MCF 10A (cell line): ENCODE measurements at regions of chr7 and their contacts with region 1.

Region 1: GRCh38 chr7:74401137-74401859 is 52.4 kb upstream of the GTF2IRD1 start:
- DNase-seq: peak; percentile 71
- H3K4me3 Mint-ChIP-seq: no peak overlapping the region
- H3K27ac Mint-ChIP-seq: no peak overlapping the region
- H3K4me1 Mint-ChIP-seq: no peaks in the 10 kb centered on the region
- H3K27me3 Mint-ChIP-seq: no peaks in the 10 kb centered on the region
- CTCF ChIP-seq: peak; percentile 99

Region 2: DNA sequence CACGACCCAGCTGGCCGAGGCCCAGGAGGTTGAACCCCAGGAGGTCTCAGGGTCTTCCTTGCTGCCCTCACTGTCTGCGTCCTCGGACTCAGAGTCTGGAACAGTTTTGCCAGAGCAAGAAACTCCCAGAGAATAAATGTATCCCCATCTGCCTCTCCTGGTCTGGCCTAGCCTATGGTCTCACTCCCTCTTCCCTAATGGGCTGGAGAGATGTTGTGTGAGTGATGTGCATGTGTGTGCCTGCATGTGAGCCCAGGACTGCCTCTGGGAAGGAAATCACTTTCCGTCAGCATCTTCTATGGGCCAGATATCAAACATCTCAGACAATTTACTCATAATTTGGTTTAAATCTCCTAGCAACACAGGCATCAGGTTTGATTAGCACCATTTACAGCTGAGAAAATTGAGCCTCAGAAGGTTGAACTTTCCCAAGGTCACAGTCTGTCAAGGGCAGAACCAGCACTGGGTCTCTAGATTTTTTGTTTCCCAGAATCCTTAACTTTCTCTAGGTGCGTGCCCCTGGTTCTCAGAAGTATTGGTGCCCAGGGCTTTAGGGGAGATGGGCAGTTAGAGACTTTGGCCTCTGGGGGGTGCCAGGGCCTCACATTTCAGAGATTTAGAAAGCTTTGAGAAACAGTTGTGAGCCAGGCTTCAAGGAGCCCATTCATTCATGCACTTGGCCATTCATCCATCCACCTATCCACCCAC is 535.4 kb before region 1 on chr7:
- CTCF ChIA-PET with region 1: interaction called, 17 read pairs
- POLR2A ChIA-PET with region 1: no interaction called
- intact Hi-C with region 1: loop called (anchors 1 kb)
- DNase-seq: peak; percentile 68
- H3K4me3 Mint-ChIP-seq: no peak overlapping the region
- H3K27ac Mint-ChIP-seq: no peak overlapping the region
- H3K4me1 Mint-ChIP-seq: no peaks in the 10 kb centered on the region
- H3K27me3 Mint-ChIP-seq: no peaks in the 10 kb centered on the region
- CTCF ChIP-seq: peak; percentile 77

Region 3: DNA sequence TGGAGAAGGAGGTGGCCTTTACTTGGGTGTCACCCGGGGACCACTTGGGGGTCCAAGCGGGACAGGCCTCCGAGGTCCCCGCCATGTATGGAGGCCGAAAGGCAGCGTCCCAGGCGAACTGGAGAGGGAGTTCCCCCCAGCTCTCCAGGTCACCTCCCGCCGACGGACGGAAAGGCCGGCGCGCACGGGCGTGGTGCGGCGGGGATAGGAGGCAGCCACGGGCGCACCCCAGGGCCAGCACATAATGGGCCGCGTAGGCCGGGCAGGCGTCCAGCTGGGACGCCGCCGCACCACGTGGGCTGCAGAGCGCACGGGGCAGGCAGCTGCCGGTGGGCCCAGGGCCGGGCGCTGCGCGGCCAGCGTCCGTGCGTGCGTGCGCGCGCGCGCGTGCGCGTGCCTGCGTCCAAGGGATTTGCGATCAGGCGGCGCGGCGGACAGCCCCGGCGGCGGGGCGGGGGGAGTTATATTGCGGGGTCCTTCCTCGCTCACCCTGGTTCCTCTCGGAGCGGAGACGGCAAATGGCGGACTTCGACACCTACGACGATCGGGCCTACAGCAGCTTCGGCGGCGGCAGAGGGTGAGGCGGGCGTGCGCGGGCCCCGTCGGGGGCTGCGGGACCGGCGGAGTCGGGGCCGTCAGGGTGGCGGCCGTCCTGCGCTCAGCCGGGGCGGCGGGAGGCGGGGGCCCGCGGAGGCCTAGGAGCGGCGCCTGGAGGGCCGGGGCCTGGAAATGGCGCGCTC is 227.3 kb before region 1 on chr7 and contains the start of gene EIF4H:
- CTCF ChIA-PET with region 1: interaction called, 19 read pairs
- POLR2A ChIA-PET with region 1: no interaction called
- intact Hi-C with region 1: no loop called
- DNase-seq: peak; percentile 89
- H3K4me3 Mint-ChIP-seq: peak within 1 kb of the TSS; percentile 87
- H3K27ac Mint-ChIP-seq: peak within 1 kb of the TSS; percentile 92
- H3K4me1 Mint-ChIP-seq: peaks cover 29% of the 10 kb centered on the region
- H3K27me3 Mint-ChIP-seq: no peaks in the 10 kb centered on the region
- CTCF ChIP-seq: no peak
- total RNA-seq, gene EIF4H: 365 and 420 TPM in 2 replicates

Region 4: GRCh38 chr7:74240482-74240881 is 160.8 kb before region 1 on chr7:
- CTCF ChIA-PET with region 1: interaction called, 14 read pairs
- POLR2A ChIA-PET with region 1: no interaction called
- intact Hi-C with region 1: no loop called
- DNase-seq: no peak
- H3K4me3 Mint-ChIP-seq: no peak overlapping the region
- H3K27ac Mint-ChIP-seq: no peak overlapping the region
- H3K4me1 Mint-ChIP-seq: no peaks in the 10 kb centered on the region
- H3K27me3 Mint-ChIP-seq: no peaks in the 10 kb centered on the region
- CTCF ChIP-seq: no peak

Region 5: GRCh38 chr7:74289018-74289658 is 112.2 kb before region 1 on chr7 and contains the start of gene CLIP2:
- CTCF ChIA-PET with region 1: interaction called, 27 read pairs
- POLR2A ChIA-PET with region 1: no interaction called
- intact Hi-C with region 1: no loop called
- DNase-seq: peak; percentile 72
- H3K4me3 Mint-ChIP-seq: peak within 1 kb of the TSS; percentile 70
- H3K27ac Mint-ChIP-seq: no peak within 1 kb of the TSS
- H3K4me1 Mint-ChIP-seq: peaks cover 15% of the 10 kb centered on the region
- H3K27me3 Mint-ChIP-seq: no peaks in the 10 kb centered on the region
- CTCF ChIP-seq: no peak
- total RNA-seq, gene CLIP2: 13.7 and 14.2 TPM in 2 replicates

Region 6: DNA sequence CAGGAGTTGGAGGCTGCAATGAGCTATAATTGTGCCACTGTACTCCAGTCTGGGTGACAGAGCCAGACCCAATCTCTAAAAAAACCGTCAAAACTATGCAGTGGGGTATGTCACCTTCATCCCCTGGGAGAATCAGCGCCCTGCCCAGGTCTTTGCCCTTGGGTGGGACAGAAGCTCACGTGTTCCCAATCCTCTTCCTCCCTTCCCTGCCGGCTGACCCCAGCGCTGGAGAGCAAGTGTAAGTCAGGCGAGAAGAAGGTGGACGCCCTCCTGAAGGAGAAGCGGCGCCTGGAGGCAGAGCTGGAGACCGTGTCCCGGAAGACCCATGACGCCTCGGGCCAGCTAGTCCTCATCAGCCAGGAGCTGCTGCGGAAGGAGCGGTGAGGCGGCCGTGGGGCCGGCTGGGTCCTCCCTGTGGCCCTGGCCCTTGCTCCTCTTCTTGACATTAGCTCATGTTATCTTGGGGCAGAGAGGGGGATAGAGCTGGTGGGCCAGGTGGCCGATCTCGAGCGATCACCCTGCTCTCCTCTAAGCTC is 12.3 kb before region 1 on chr7:
- CTCF ChIA-PET with region 1: interaction called, 32 read pairs
- POLR2A ChIA-PET with region 1: no interaction called
- intact Hi-C with region 1: no loop called
- DNase-seq: no peak
- H3K4me3 Mint-ChIP-seq: no peak overlapping the region
- H3K27ac Mint-ChIP-seq: no peak overlapping the region
- H3K4me1 Mint-ChIP-seq: peaks cover 3% of the 10 kb centered on the region
- H3K27me3 Mint-ChIP-seq: no peaks in the 10 kb centered on the region
- CTCF ChIP-seq: no peak